Panc1 (cell line): ENCODE measurements at regions of chr10 and their contacts with region 1.

Region 1: GRCh38 chr10:118763202-118763988 is 8.6 kb upstream of the CACUL1 start:
- DNase-seq: no peak
- ATAC-seq: no peak
- H3K4me3 ChIP-seq: no peak overlapping the region
- H3K27ac ChIP-seq: no peak overlapping the region
- H3K4me1 ChIP-seq: no peaks in the 10 kb centered on the region
- H3K27me3 ChIP-seq: no peaks in the 10 kb centered on the region; the same call in 1 of the 2 replicates
- CTCF ChIP-seq: no peak

Region 2: DNA sequence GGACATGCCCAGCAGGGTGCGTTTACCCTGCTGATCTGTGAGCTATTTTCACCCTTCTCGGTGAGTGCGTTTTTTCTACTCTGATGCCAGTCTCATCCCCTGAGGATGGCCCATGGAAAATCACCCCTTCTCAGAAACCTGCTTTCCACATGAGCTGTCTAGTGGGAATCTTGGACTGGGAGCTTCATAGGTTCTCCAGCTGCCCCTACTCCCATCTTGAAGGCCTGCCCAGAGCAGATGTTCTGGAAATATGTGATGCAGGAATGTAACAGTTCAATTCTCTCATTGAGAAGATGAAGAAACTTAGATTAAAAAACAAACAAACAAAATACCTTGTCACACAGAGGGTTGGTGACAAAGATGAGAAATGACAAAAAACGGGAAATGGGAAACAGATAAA is 569.8 kb before region 1 on chr10:
- CTCF ChIA-PET with region 1: no interaction called
- POLR2A ChIA-PET with region 1: no interaction called
- in situ Hi-C with region 1: no loop called
- intact Hi-C with region 1: no loop called
- DNase-seq: no peak
- ATAC-seq: no peak
- H3K4me3 ChIP-seq: no peak overlapping the region
- H3K27ac ChIP-seq: no peak overlapping the region
- H3K4me1 ChIP-seq: no peaks in the 10 kb centered on the region
- H3K27me3 ChIP-seq: 0 out of 2 replicates have a peak, but pooled peaks cover 4% of the 10 kb centered on the region
- CTCF ChIP-seq: no peak

Region 3: GRCh38 chr10:118626953-118627352 is 136.4 kb before region 1 on chr10:
- CTCF ChIA-PET with region 1: no interaction called
- POLR2A ChIA-PET with region 1: no interaction called
- in situ Hi-C with region 1: no loop called
- intact Hi-C with region 1: no loop called
- DNase-seq: no peak
- ATAC-seq: peak; percentile 43; the same call in 1 of the 2 replicates
- H3K4me3 ChIP-seq: no peak overlapping the region
- H3K27ac ChIP-seq: no peak overlapping the region
- H3K4me1 ChIP-seq: no peaks in the 10 kb centered on the region
- H3K27me3 ChIP-seq: peaks cover 2% of the 10 kb centered on the region; the same call in 1 of the 2 replicates
- CTCF ChIP-seq: peak; percentile 67

Region 4: GRCh38 chr10:118668228-118668952 is 95.0 kb before region 1 on chr10:
- CTCF ChIA-PET with region 1: no interaction called
- POLR2A ChIA-PET with region 1: interaction called, 10 read pairs
- in situ Hi-C with region 1: no loop called
- intact Hi-C with region 1: no loop called
- DNase-seq: no peak
- ATAC-seq: no peak
- H3K4me3 ChIP-seq: no peak overlapping the region
- H3K27ac ChIP-seq: no peak overlapping the region
- H3K4me1 ChIP-seq: no peaks in the 10 kb centered on the region
- H3K27me3 ChIP-seq: no peaks in the 10 kb centered on the region
- CTCF ChIP-seq: no peak; the same call in 1 of the 2 replicates

Region 5: GRCh38 chr10:118698421-118698820 is 65.0 kb before region 1 on chr10:
- CTCF ChIA-PET with region 1: no interaction called
- POLR2A ChIA-PET with region 1: no interaction called
- in situ Hi-C with region 1: no loop called
- intact Hi-C with region 1: no loop called
- DNase-seq: no peak
- ATAC-seq: peak; percentile 65; the same call in 1 of the 2 replicates
- H3K4me3 ChIP-seq: no peak overlapping the region
- H3K27ac ChIP-seq: no peak overlapping the region
- H3K4me1 ChIP-seq: no peaks in the 10 kb centered on the region
- H3K27me3 ChIP-seq: no peaks in the 10 kb centered on the region
- CTCF ChIP-seq: no peak

Region 6: DNA sequence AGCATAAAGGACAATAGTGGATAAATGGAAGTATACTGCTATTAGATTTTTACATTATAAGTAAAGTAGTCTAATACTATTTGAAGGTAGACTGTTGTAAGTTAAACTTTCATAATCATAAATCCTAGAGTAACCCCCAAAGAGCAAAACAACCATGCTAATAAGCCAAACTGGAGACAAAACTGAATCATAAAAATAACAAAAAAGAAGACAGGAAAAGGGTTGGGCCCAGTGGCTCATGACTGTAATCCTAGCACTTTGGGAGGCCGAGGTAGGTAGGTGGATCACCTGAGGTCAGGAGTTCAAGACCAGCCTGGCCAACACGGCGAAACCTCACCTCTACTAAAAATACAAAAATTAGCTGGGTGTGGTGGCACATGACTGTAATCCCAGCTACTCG is 18.3 kb before region 1 on chr10:
- CTCF ChIA-PET with region 1: no interaction called
- POLR2A ChIA-PET with region 1: no interaction called
- in situ Hi-C with region 1: no loop called
- intact Hi-C with region 1: no loop called
- DNase-seq: no peak
- ATAC-seq: no peak
- H3K4me3 ChIP-seq: no peak overlapping the region
- H3K27ac ChIP-seq: no peak overlapping the region
- H3K4me1 ChIP-seq: peaks cover 32% of the 10 kb centered on the region
- H3K27me3 ChIP-seq: no peaks in the 10 kb centered on the region
- CTCF ChIP-seq: no peak